ENCODE measurements at regions of chr2 and their contacts with region 1.

Region 1: GRCh38 chr2:180644709-180645108 is 335.7 kb upstream of the UBE2E3 start:
- DNase-seq: no peak
- H3K4me3 ChIP-seq: no peak overlapping the region
- H3K27ac ChIP-seq: no peak overlapping the region
- H3K4me1 ChIP-seq: no peaks in the 10 kb centered on the region
- H3K27me3 ChIP-seq: no peaks in the 10 kb centered on the region
- CTCF ChIP-seq: no peak

Region 2: GRCh38 chr2:179671043-179671981 is 973.4 kb before region 1 on chr2:
- CTCF ChIA-PET with region 1: no interaction called
- POLR2A ChIA-PET with region 1: interaction called, 15 read pairs
- intact Hi-C with region 1: no loop called
- DNase-seq: no peak
- H3K4me3 ChIP-seq: no peak overlapping the region
- H3K27ac ChIP-seq: no peak overlapping the region
- H3K4me1 ChIP-seq: no peaks in the 10 kb centered on the region
- H3K27me3 ChIP-seq: no peaks in the 10 kb centered on the region
- CTCF ChIP-seq: no peak

Region 3: GRCh38 chr2:180343528-180344345 is 301.0 kb before region 1 on chr2:
- CTCF ChIA-PET with region 1: no interaction called
- POLR2A ChIA-PET with region 1: no interaction called
- intact Hi-C with region 1: no loop called
- DNase-seq: no peak
- H3K4me3 ChIP-seq: no peak overlapping the region
- H3K27ac ChIP-seq: no peak overlapping the region
- H3K4me1 ChIP-seq: no peaks in the 10 kb centered on the region
- H3K27me3 ChIP-seq: no peaks in the 10 kb centered on the region
- CTCF ChIP-seq: no peak